ENCODE measurements at regions of chr18 and their contacts with region 1.

Region 1: GRCh38 chr18:77061946-77062517 is 70.6 kb downstream of the MBP start:
- DNase-seq: peak; percentile 54
- H3K4me3 ChIP-seq: peak overlapping the region; percentile 8
- H3K27ac ChIP-seq: peak overlapping the region; percentile 96
- H3K4me1 ChIP-seq: peaks cover 54% of the 10 kb centered on the region
- CTCF ChIP-seq: peak; percentile 60

Region 2: DNA sequence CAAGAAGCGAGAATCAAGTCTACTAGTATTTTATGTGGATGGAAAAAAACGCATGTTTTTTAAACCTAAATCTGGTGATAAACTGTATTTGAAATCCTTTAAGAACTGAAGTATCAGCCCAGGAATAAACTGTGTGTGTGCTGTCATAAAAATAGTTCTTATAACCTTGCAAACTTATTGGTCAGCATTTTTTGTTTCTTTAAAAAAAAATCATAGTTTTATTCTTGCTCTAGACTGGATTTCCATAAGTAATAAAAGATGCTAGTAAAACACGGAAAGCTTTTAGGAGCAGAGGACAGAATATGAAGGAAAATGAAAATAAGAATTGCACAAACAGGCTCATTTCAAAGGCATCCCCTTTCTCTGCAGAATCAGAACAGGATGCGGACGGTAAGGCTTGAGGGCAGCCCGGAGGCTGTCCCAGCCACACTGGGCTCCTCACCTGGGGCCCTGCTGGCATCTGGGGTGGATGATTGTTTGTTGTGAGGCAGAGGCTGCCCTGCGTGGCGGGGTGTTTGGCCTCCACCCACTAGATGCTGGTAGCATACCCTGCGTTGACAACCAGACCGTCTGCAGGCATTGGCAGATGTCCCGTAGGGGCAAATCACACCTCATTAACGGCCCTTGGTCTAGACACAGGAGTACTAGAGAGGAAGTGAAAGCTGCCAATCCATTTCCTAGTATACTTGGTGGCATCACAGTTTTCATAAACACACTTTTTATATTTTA is 18.1 kb after region 1 on chr18:
- CTCF ChIA-PET with region 1: no interaction called
- POLR2A ChIA-PET with region 1: no interaction called
- intact Hi-C with region 1: loop called (anchors 1 kb)
- DNase-seq: peak; percentile 60
- H3K4me3 ChIP-seq: peak overlapping the region; percentile 32
- H3K27ac ChIP-seq: peak overlapping the region; percentile 46
- H3K4me1 ChIP-seq: peaks cover 21% of the 10 kb centered on the region
- CTCF ChIP-seq: no peak

Region 3: GRCh38 chr18:77210249-77210648 is 148.2 kb after region 1 on chr18:
- CTCF ChIA-PET with region 1: no interaction called
- POLR2A ChIA-PET with region 1: no interaction called
- intact Hi-C with region 1: loop called (anchors 5 kb)
- DNase-seq: no peak
- H3K4me3 ChIP-seq: no peak overlapping the region
- H3K27ac ChIP-seq: no peak overlapping the region
- H3K4me1 ChIP-seq: no peaks in the 10 kb centered on the region
- CTCF ChIP-seq: no peak

Region 4: DNA sequence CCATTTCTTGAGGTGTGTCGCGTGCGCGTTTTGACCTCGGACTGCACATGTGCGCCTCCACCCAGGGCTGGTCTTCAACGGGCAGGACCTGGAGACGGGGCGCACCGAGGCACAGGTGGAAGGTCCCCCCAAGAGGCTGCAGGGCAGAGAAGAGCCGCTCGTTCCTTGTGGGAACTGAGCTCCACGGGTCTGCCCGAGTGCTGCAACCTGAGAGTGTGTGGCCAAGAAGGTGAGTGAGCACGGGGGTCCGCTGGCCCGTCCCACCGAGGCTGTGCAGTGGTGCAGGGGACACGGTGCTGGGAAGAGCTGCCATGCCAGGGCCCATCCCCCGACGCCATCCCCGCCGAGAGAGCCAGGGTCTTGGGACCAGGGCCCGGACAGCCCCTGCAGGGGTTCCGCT is 455.9 kb after region 1 on chr18:
- CTCF ChIA-PET with region 1: no interaction called
- POLR2A ChIA-PET with region 1: no interaction called
- intact Hi-C with region 1: no loop called
- DNase-seq: no peak
- H3K4me3 ChIP-seq: no peak overlapping the region
- H3K27ac ChIP-seq: no peak overlapping the region
- H3K4me1 ChIP-seq: no peaks in the 10 kb centered on the region
- CTCF ChIP-seq: no peak